ENCODE measurements at regions of chr2 and their contacts with region 1.

Region 1: GRCh38 chr2:235106874-235107639 is 155.2 kb downstream of the SH3BP4 start:
- DNase-seq: peak; percentile 51 to 69
- ATAC-seq: peak; percentile 58 to 91 (median 82)
- H3K4me3 ChIP-seq: no peak overlapping the region
- H3K27ac ChIP-seq: no peak overlapping the region
- H3K4me1 ChIP-seq: peaks cover 0 to 11% (median 3%) of the 10 kb centered on the region in 9 donors
- H3K27me3 ChIP-seq: no peaks in the 10 kb centered on the region
- CTCF ChIP-seq: peak; percentile 49 to 85 (median 67)

Region 2: GRCh38 chr2:234544659-234545611 is 562.1 kb before region 1 on chr2:
- intact Hi-C with region 1: loop called (anchors 1 to 5 kb)
- DNase-seq: peak; percentile 53 to 65
- ATAC-seq: peak in 7 of 8 donors; percentile 54 to 74 (median 64)
- H3K4me3 ChIP-seq: no peak overlapping the region
- H3K27ac ChIP-seq: no peak overlapping the region
- H3K4me1 ChIP-seq: peaks cover 0 to 7% (median 0%) of the 10 kb centered on the region in 9 donors
- H3K27me3 ChIP-seq: peaks cover 0 to 22% (median 5%) of the 10 kb centered on the region in 7 donors
- CTCF ChIP-seq: peak; percentile 82 to 97 (median 92)

Region 3: GRCh38 chr2:234550511-234551107 is 556.4 kb before region 1 on chr2:
- intact Hi-C with region 1: loop called (anchors 1 to 5 kb)
- DNase-seq: peak; percentile 48 to 64
- ATAC-seq: peak in 7 of 8 donors; percentile 69 to 88 (median 80)
- H3K4me3 ChIP-seq: no peak overlapping the region
- H3K27ac ChIP-seq: no peak overlapping the region
- H3K4me1 ChIP-seq: peaks cover 0 to 8% (median 0%) of the 10 kb centered on the region in 9 donors
- H3K27me3 ChIP-seq: peaks cover 0 to 17% (median 7%) of the 10 kb centered on the region in 7 donors
- CTCF ChIP-seq: peak; percentile 82 to 98 (median 95)

Region 4: DNA sequence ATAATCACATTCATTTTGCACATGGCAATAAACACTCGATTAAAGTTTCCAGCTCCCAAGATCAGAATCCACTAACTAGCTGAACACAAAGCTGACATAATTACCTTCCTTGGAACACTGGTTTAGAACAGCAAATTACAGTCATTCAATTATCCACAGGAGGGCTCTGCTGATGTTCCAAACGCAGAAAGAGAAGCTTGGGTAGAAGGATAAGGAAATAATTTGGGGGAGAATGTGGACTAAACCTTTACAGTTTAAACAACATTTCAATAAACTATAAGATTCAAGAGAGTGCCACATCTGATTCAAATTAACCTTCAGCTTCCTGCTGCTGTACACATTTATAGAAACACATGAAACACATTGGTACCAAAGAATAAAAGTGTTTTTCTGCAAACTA is 542.4 kb before region 1 on chr2:
- intact Hi-C with region 1: loop called in 1 of 10 experiments (anchors 5 kb)
- DNase-seq: no peak
- ATAC-seq: no peak
- H3K4me3 ChIP-seq: no peak overlapping the region
- H3K27ac ChIP-seq: no peak overlapping the region
- H3K4me1 ChIP-seq: no peaks in the 10 kb centered on the region
- H3K27me3 ChIP-seq: peaks cover 0 to 13% (median 2%) of the 10 kb centered on the region in 7 donors
- CTCF ChIP-seq: peak in 3 of 9 donors; percentile 27 to 36 (median 30)

Region 5: DNA sequence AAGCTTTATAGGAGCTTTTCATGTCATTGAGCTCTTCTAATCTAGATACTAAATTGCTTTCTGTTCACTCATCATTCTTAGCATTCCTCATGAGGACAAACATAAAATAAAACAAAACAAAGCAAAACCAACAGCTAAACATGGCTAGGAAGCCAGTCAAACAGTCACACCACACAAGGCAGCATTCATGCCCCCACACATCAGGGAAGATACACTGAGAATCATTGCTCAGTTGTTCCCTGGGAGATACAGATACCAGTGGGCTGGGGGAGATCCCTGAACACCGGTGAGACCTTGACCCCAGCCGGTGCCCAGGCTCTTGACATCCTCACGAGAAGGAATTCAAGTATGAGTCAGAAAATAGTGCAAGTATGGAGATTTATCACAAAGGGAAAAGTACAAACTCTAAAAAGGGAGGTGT is 432.3 kb before region 1 on chr2:
- intact Hi-C with region 1: no loop called
- DNase-seq: no peak
- ATAC-seq: no peak
- H3K4me3 ChIP-seq: no peak overlapping the region
- H3K27ac ChIP-seq: no peak overlapping the region
- H3K4me1 ChIP-seq: peaks cover 0 to 15% (median 6%) of the 10 kb centered on the region in 9 donors
- H3K27me3 ChIP-seq: no peaks in the 10 kb centered on the region
- CTCF ChIP-seq: no peak

Region 6: GRCh38 chr2:235005603-235006259 is 101.3 kb before region 1 on chr2:
- intact Hi-C with region 1: loop called in 6 of 10 experiments (anchors 5 to 10 kb)
- DNase-seq: peak; percentile 54 to 67
- ATAC-seq: peak; percentile 77 to 91 (median 84)
- H3K4me3 ChIP-seq: no peak overlapping the region
- H3K27ac ChIP-seq: peak overlapping the region in 3 of 10 donors; percentile 18 to 44 (median 19)
- H3K4me1 ChIP-seq: peaks cover 11 to 69% (median 34%) of the 10 kb centered on the region in 9 donors
- H3K27me3 ChIP-seq: no peaks in the 10 kb centered on the region
- CTCF ChIP-seq: peak in 7 of 9 donors; percentile 17 to 53 (median 45)